GM12878 (cell line): ENCODE measurements at regions of chr16 and their contacts with region 1.

Region 1: GRCh38 chr16:78925083-78925767 is 675.3 kb downstream of the MAF start:
- DNase-seq: no peak
- ATAC-seq: peak; percentile 87
- H3K4me3 ChIP-seq: no peak overlapping the region
- H3K27ac ChIP-seq: no peak overlapping the region
- H3K4me1 ChIP-seq: no peaks in the 10 kb centered on the region
- H3K27me3 ChIP-seq: no peaks in the 10 kb centered on the region
- CTCF ChIP-seq: peak; percentile 34 to 50 (median 42); a peak in 4 of 6 replicates
- EP300 ChIP-seq: no peak
- POLR2A ChIP-seq: no peak
- RAD21 ChIP-seq: peak; percentile 51

Region 2: DNA sequence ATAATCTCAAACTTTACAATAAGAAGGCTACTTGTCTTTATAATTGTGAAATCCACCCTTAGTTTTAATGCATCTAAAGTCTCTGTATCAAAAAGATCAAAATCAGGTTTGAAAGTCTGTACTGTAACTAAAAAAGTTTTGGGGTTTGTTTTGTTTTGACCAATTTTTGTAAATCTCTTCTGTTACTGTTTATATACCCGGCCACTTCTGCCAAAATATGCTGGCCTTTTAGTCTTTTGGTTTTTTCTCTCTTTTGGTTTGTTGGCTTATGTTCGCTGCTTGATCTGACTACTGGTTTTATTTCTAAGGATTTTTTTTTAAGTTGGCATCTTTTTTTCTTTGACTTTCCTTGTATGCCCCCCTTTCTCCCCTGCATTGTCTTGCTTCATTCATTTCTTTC is 20.1 kb after region 1 on chr16:
- CTCF ChIA-PET with region 1: no interaction called
- POLR2A ChIA-PET with region 1: no interaction called
- RAD21 ChIA-PET with region 1: no interaction called
- SMC1A ChIA-PET with region 1: no interaction called
- in situ Hi-C with region 1: no loop called
- intact Hi-C with region 1: no loop called
- DNase-seq: no peak
- ATAC-seq: no peak
- H3K4me3 ChIP-seq: no peak overlapping the region
- H3K27ac ChIP-seq: no peak overlapping the region
- H3K4me1 ChIP-seq: no peaks in the 10 kb centered on the region
- H3K27me3 ChIP-seq: no peaks in the 10 kb centered on the region
- CTCF ChIP-seq: no peak
- EP300 ChIP-seq: no peak
- POLR2A ChIP-seq: no peak
- RAD21 ChIP-seq: no peak

Region 3: GRCh38 chr16:79261481-79261940 is 336.3 kb after region 1 on chr16:
- CTCF ChIA-PET with region 1: no interaction called
- POLR2A ChIA-PET with region 1: no interaction called
- RAD21 ChIA-PET with region 1: no interaction called
- SMC1A ChIA-PET with region 1: no interaction called
- in situ Hi-C with region 1: no loop called
- intact Hi-C with region 1: loop called (anchors 10 kb)
- DNase-seq: no peak
- ATAC-seq: peak; percentile 63; the same call in 2 of the 3 replicates
- H3K4me3 ChIP-seq: no peak overlapping the region
- H3K27ac ChIP-seq: no peak overlapping the region
- H3K4me1 ChIP-seq: no peaks in the 10 kb centered on the region
- H3K27me3 ChIP-seq: no peaks in the 10 kb centered on the region; a peak in 1 of 4 replicates
- CTCF ChIP-seq: peak; percentile 28 to 51 (median 43); a peak in 5 of 6 replicates
- EP300 ChIP-seq: no peak
- POLR2A ChIP-seq: no peak
- RAD21 ChIP-seq: peak; percentile 38; the same call in 1 of the 2 replicates